ENCODE measurements at regions of chr1 and their contacts with region 1.

Region 1: GRCh38 chr1:203117611-203118575 is 9.6 kb upstream of the ADORA1 start:
- DNase-seq: peak; percentile 51
- H3K4me3 ChIP-seq: no peak overlapping the region
- H3K27ac ChIP-seq: no peak overlapping the region
- H3K4me1 ChIP-seq: no peaks in the 10 kb centered on the region
- H3K27me3 ChIP-seq: peaks cover 19 to 29% of the 10 kb centered on the region in 2 experiments
- CTCF ChIP-seq: peak; percentile 70 to 95
- POLR2A ChIP-seq: no peak

Region 2: GRCh38 chr1:203038891-203039608 is 78.8 kb before region 1 on chr1:
- CTCF ChIA-PET with region 1: interaction called, 37 read pairs
- POLR2A ChIA-PET with region 1: no interaction called
- dilution Hi-C with region 1: no loop called
- intact Hi-C with region 1: loop called (anchors 5 kb)
- DNase-seq: peak; percentile 57
- H3K4me3 ChIP-seq: no peak overlapping the region
- H3K27ac ChIP-seq: no peak overlapping the region
- H3K4me1 ChIP-seq: no peaks in the 10 kb centered on the region
- H3K27me3 ChIP-seq: peaks cover 0 to 18% of the 10 kb centered on the region in 2 experiments
- CTCF ChIP-seq: peak; percentile 86
- POLR2A ChIP-seq: no peak

Region 3: DNA sequence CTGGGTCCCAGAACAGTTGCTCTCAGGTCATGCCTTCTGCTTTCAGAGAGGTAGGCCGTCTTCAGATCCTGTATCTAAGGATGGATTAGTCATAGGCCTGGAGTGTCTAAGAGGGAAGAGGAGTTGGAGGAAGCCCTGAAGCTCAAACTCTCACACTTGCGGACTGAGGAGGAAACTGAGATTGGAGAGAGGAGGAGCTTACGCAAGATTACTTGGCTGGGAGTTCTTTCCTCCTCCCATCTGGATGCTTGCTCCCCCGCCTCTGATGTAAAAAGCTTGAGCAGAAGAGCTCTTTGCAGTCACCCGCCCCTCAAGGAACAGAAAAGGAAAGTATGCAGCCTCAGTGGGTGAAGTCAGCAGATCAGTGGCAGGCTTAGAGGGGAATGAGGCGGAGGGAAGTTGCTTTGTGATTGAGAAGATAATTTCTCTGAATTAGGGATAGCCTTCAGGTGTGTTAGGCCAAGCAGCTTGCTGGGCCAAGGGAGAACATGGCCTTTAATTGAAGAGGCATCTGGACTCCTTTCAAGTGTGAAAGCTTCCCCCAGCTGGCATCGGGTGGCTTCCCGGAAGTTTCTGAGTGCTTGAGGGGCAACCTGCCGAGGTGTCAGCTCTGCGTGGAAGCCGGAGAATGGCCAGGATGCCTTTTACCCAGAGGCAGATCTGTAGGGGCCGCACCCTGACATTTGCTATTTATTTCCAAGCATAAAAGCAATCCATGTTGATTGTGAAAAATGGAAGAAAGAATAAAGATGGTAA is 16.3 kb after region 1 on chr1:
- CTCF ChIA-PET with region 1: interaction called, 19 read pairs
- POLR2A ChIA-PET with region 1: no interaction called
- dilution Hi-C with region 1: no loop called
- intact Hi-C with region 1: no loop called
- DNase-seq: no peak
- H3K4me3 ChIP-seq: no peak overlapping the region
- H3K27ac ChIP-seq: no peak overlapping the region
- H3K4me1 ChIP-seq: no peaks in the 10 kb centered on the region
- H3K27me3 ChIP-seq: peaks cover 8 to 19% of the 10 kb centered on the region in 2 experiments
- CTCF ChIP-seq: no peak
- POLR2A ChIP-seq: no peak

Region 4: DNA sequence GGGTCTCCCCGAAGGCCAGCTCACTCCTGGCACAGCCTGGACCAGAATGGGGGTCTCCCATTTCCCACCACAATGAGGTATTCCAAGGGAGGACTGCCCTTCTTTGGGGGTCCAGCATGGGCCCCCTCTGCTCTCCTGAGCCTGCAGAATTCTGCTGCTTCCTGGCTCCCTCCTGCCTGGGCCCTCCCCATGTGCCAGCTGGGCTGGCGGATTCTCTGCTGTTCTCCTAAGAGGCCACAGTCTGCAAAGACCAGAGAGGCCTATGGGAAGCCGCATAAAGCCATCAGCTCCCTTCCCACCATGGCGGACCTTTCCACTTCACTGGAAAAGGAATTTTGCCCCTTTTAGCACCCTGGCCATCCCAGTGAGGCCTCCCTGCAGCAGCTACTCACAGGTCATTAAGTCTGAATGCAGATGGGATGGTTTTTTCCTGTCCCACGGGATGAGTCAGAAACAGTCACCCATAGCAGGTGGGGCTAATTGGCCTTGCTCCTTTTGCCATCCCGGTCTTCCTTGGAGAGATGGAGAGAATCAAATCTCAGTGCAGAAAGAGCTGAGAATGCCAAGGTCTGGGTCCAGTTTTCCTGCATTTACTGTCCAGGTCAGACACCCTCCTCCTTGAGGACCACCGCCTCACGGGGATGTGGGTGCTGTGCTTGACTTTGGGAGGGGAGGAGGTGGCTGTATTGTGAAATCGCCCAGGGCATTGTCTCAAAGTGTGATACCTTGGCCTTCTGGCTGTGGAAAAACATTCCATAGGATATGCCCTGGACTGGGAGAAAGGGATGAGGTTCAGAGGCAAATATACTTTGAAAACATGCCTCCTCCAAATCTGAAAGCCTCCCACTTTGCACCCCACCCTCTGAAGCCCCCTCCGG is 34.5 kb after region 1 on chr1:
- CTCF ChIA-PET with region 1: interaction called, 19 read pairs
- POLR2A ChIA-PET with region 1: no interaction called
- dilution Hi-C with region 1: no loop called
- intact Hi-C with region 1: no loop called
- DNase-seq: peak; percentile 8
- H3K4me3 ChIP-seq: no peak overlapping the region
- H3K27ac ChIP-seq: peak overlapping the region; percentile 62
- H3K4me1 ChIP-seq: peaks cover 28% of the 10 kb centered on the region
- H3K27me3 ChIP-seq: peaks cover 0 to 4% of the 10 kb centered on the region in 2 experiments
- CTCF ChIP-seq: no peak
- POLR2A ChIP-seq: no peak

Region 5: GRCh38 chr1:203177470-203178039 is 59.7 kb after region 1 on chr1:
- CTCF ChIA-PET with region 1: interaction called, 317 read pairs
- POLR2A ChIA-PET with region 1: interaction called, 3 read pairs
- dilution Hi-C with region 1: no loop called
- intact Hi-C with region 1: loop called (anchors 1 kb)
- DNase-seq: no peak
- H3K4me3 ChIP-seq: no peak overlapping the region
- H3K27ac ChIP-seq: no peak overlapping the region
- H3K4me1 ChIP-seq: peaks cover 6% of the 10 kb centered on the region
- H3K27me3 ChIP-seq: no peaks in the 10 kb centered on the region
- CTCF ChIP-seq: no peak
- POLR2A ChIP-seq: no peak

Measured in endothelial cell of umbilical vein (primary cell).